Activated CD4-positive, alpha-beta T cell treated with anti-CD3 and anti-CD28 coated beads for 36 hours (primary cell): ENCODE measurements at regions of chr3 and their contacts with region 1.

Region 1: DNA sequence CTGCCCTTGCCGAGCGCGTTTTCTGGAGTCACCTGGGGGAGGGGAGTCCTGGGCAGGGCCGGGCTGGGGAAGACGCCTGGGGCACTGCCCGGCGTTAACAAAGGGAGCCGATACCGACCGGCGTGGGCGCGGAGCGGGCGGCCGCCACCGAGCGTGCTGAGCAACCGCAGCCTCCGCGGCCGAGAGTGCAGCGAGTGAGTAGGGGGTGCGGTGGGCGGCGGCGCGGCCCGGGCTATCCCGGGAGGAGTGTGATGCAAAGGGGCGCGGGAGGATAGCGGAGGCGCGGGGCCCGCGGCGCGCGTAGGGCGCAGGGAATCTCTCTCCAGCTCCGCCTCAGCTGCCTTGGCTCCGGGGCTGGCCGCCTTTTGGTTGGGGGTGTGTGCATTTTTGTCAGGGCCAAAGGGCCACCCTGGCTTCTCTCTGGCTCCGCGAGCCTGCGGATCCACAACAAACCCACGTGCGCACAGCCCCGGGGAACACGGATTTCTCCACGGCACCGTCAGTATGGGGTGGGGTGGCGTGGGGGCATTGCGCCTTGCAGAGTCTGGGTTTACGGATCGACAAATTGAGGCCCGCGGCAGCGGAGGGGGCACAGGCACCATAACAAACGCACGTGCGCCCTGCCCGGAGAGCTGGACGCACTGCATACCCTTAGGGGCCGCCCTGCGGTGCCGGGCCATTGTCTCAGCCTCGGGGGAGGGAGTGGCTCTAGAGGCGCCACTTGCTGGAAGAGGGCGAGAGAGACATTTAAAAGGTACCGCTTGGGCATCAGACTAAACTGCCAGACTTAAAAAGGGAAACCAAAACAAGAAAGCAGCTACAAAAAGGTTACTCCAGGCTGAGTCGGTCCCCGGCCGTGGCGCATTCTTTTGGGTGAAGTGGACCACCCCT is 560 bp downstream of the ST6GAL1 start:
- DNase-seq: peak; percentile 79
- ATAC-seq: peak; percentile 80
- H3K4me3 Mint-ChIP-seq: peak overlapping the region; percentile 90
- H3K27ac Mint-ChIP-seq: peak overlapping the region; percentile 96
- H3K4me1 Mint-ChIP-seq: peaks cover 35% of the 10 kb centered on the region
- H3K27me3 Mint-ChIP-seq: no peaks in the 10 kb centered on the region

Region 2: DNA sequence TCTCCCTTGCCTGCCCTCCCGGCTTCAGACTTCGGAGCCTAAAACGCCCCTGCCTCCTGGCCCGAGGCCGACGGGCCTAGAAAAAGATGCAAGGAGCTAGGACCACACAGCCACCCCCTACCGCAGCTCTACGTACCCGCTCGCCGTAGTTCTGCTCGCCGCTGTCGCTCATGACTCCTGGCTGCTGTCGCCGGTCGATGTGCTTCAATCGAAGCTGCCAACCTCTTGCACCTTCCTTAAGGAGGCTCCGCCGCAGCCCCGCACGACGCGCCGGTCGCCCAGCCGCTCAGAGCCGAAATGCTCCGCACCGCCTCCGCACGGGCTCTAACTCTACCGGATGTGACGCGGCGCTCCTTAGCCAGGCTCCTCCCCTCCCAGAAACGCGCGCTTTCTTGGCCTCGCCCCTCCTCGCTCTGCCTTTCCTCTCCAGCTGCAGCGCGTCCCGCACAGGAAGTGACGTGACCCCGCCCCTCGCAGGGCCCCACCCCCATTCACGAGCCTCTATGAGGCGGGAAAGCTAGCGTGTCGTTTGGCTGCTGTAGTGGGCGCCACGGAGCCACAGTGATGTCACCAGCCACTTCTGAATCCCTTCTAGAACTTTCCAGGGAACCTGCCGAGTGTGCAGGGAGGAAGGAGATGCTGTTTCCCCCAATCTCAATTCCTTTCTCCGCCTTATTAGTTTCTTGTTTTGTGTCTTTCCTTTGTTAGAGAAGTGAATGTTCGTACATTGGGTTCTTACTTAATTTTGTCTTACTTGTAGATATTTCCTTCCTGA is 993.0 kb before region 1 on chr3 and contains the start of gene TRA2B:
- CTCF ChIA-PET with region 1: no interaction called
- POLR2A ChIA-PET with region 1: interaction called, 4 read pairs
- intact Hi-C with region 1: loop called in 1 of 2 experiments (anchors 5 kb)
- DNase-seq: peak; percentile 100
- ATAC-seq: peak; percentile 90
- H3K4me3 Mint-ChIP-seq: peak within 1 kb of the TSS; percentile 97
- H3K27ac Mint-ChIP-seq: peak within 1 kb of the TSS; percentile 100
- H3K4me1 Mint-ChIP-seq: peaks cover 23% of the 10 kb centered on the region
- H3K27me3 Mint-ChIP-seq: no peaks in the 10 kb centered on the region
- total RNA-seq, gene TRA2B: 228 to 344 TPM

Region 3: DNA sequence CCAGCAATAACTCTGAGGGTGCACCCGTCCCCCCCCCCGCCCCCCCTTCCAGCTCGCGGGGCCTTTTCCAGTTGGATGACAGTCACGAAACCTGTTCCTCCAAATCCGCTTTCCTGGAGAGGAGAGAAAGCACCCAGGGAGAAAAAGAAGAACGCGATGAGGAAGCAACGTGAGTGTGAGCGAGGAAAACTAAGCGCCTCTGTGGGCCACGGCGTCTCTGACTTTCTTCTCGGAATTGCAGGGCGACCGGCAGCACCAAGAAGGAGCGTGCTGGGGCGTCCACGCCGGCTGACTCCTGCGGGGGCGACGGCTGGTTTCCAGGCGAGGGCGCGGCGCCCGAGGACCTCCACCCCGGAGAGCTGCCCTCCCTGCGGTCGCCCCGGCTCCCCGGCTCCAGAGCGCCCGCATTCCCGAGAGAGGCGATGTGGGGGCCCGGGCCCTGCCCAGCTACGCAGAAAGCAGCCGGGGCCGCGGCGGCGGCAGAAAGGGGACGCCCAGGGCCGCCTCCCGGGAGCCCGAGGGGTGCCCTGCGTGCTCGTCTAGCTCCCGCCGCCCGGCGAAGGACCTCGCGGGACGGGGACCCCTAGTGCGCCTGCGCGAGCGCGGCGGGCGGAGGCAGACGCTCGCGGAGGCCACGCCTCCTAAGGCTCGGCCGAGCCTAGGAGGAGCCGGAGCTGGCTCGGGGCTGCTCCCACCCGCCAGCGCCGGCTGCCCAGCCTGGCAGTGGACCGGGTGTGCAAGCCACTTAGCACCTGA is 103.7 kb before region 1 on chr3:
- CTCF ChIA-PET with region 1: no interaction called
- POLR2A ChIA-PET with region 1: interaction called, 4 read pairs
- intact Hi-C with region 1: loop called (anchors 1 kb)
- DNase-seq: peak; percentile 91
- ATAC-seq: peak; percentile 83
- H3K4me3 Mint-ChIP-seq: peak overlapping the region; percentile 82
- H3K27ac Mint-ChIP-seq: no peak overlapping the region
- H3K4me1 Mint-ChIP-seq: peaks cover 23% of the 10 kb centered on the region
- H3K27me3 Mint-ChIP-seq: peaks cover 31% of the 10 kb centered on the region

Region 4: GRCh38 chr3:186909078-186909853 is 21.6 kb before region 1 on chr3:
- CTCF ChIA-PET with region 1: interaction called, 7 read pairs
- POLR2A ChIA-PET with region 1: interaction called, 3 read pairs
- intact Hi-C with region 1: loop called (anchors 2 kb)
- DNase-seq: peak; percentile 82
- ATAC-seq: peak; percentile 84
- H3K4me3 Mint-ChIP-seq: peak overlapping the region; percentile 49
- H3K27ac Mint-ChIP-seq: peak overlapping the region; percentile 93
- H3K4me1 Mint-ChIP-seq: peaks cover 18% of the 10 kb centered on the region
- H3K27me3 Mint-ChIP-seq: no peaks in the 10 kb centered on the region

Region 5: GRCh38 chr3:187000711-187001151 is 69.8 kb after region 1 on chr3:
- CTCF ChIA-PET with region 1: interaction called, 4 read pairs
- POLR2A ChIA-PET with region 1: no interaction called
- intact Hi-C with region 1: loop called in 1 of 2 experiments (anchors 2 kb)
- DNase-seq: peak; percentile 54
- ATAC-seq: peak; percentile 92
- H3K4me3 Mint-ChIP-seq: peak overlapping the region; percentile 27
- H3K27ac Mint-ChIP-seq: peak overlapping the region; percentile 89
- H3K4me1 Mint-ChIP-seq: peaks cover 66% of the 10 kb centered on the region
- H3K27me3 Mint-ChIP-seq: no peaks in the 10 kb centered on the region

Region 6: GRCh38 chr3:187025656-187026316 is 94.9 kb after region 1 on chr3:
- CTCF ChIA-PET with region 1: interaction called, 4 read pairs
- POLR2A ChIA-PET with region 1: no interaction called
- intact Hi-C with region 1: loop called (anchors 1 to 5 kb)
- DNase-seq: peak; percentile 64
- ATAC-seq: peak; percentile 36
- H3K4me3 Mint-ChIP-seq: peak overlapping the region; percentile 85
- H3K27ac Mint-ChIP-seq: peak overlapping the region; percentile 97
- H3K4me1 Mint-ChIP-seq: peaks cover 49% of the 10 kb centered on the region
- H3K27me3 Mint-ChIP-seq: no peaks in the 10 kb centered on the region

Region 7: DNA sequence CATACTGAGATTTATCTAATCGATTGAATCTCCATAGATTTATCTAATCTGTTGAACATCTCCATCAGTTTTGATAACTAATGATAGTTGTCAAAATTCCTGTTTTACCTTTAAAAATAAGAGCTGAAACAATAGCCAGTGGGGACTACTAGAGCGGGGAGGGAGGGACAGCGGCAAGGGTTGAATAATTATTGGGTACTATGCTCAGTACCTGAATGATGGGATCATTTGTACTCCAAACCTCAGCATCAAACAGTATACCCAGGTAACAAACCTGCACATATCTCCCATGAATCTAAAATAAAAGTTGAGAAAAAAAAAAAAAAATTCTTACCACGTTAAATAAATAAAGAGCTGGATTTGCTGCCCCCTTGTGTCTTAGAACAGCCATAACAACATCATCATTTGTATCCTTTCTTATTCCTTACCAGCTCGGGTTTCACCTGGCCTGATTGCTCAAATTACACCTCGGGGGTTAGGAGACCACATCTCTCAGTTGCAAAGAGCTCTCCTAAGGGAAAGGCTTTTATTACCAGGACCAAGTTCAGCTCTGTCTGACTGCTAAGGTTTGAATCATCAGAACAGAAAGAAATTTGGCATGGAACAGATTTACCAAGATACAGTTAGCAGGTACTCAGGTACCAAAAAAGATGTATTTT is 234.1 kb after region 1 on chr3:
- CTCF ChIA-PET with region 1: interaction called, 5 read pairs
- POLR2A ChIA-PET with region 1: no interaction called
- intact Hi-C with region 1: loop called in 1 of 2 experiments (anchors 1 kb)
- DNase-seq: peak; percentile 36
- ATAC-seq: peak; percentile 70
- H3K4me3 Mint-ChIP-seq: no peak overlapping the region
- H3K27ac Mint-ChIP-seq: no peak overlapping the region
- H3K4me1 Mint-ChIP-seq: peaks cover 2% of the 10 kb centered on the region
- H3K27me3 Mint-ChIP-seq: no peaks in the 10 kb centered on the region